Right ventricle myocardium inferior (tissue), 1 donor: ENCODE measurements at regions of chr16 and their contacts with region 1.

Region 1: GRCh38 chr16:54193665-54194333 is 92.8 kb downstream of the IRX3 start:
- DNase-seq: peak; percentile 88
- ATAC-seq: peak; percentile 89

Region 2: GRCh38 chr16:53898997-53899396 is 294.8 kb before region 1 on chr16:
- intact Hi-C with region 1: loop called (anchors 5 kb)
- DNase-seq: no peak
- ATAC-seq: no peak

Region 3: DNA sequence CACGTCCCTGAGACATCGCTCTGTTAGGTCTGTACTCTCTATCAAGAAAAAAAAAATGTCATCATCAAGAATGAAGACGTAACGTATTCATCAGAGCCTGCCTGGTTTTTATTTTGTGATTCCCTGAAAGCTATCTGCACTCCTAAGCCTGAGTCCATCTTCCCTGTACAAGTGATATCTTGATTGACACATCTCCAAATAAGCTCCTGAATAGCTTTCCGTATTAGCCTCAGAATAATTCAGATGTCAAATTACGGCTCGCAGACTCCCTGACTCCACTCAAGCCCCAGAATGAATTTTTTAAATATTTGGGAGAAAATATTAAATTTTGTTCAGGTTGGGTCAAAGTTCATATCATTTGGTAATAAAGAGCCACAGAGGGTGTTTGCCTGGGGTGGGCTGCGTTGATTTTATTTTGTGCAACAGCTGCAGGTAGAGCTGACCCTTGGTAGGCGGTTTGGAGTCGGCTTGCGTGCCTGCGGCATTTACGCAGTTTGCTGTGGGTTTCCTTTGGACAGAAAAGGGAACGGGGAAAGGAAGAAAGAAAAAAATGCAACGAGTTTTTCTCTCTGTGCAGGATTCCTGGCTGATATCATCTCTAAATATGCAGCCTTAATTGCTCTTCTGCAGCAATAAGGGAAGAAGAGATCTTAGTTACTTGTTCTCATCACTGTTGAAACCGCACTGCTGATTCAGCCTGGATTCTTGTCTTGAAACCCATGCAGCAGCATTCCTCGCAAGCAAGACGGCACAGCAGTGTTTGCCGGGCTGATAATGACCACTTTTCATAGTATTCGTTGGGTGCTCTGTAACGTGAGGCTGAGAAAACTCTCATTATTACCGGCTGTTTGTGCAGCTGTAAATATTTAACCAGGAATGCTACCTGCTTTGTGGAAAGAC is 21.9 kb before region 1 on chr16:
- intact Hi-C with region 1: no loop called
- DNase-seq: no peak
- ATAC-seq: no peak

Region 4: GRCh38 chr16:54266363-54266955 is 72.7 kb after region 1 on chr16:
- intact Hi-C with region 1: loop called (anchors 5 kb)
- DNase-seq: no peak
- ATAC-seq: peak; percentile 80

Region 5: GRCh38 chr16:54538266-54538665 is 344.5 kb after region 1 on chr16:
- intact Hi-C with region 1: no loop called
- DNase-seq: no peak
- ATAC-seq: no peak